ENCODE measurements at regions of chr13 and their contacts with region 1.

Region 1: GRCh38 chr13:74133657-74134201 is 475 bp downstream of the KLF12 start:
- DNase-seq: peak; percentile 68 to 93
- H3K4me3 ChIP-seq: peak overlapping the region; percentile 92 to 97
- H3K27ac ChIP-seq: peak overlapping the region; percentile 96 to 98
- H3K4me1 ChIP-seq: peaks cover under 1 to 25% of the 10 kb centered on the region in 2 donors
- H3K27me3 ChIP-seq: no peaks in the 10 kb centered on the region
- CTCF ChIP-seq: no peak

Region 2: GRCh38 chr13:72781451-72782439 is 1352.0 kb before region 1 on chr13 and contains the starts of genes DIS3 and PIBF1:
- intact Hi-C with region 1: loop called (anchors 10 kb)
- DNase-seq: peak; percentile 93 to 99
- H3K4me3 ChIP-seq: peak within 1 kb of the TSS; percentile 88 to 92
- H3K27ac ChIP-seq: peak within 1 kb of the TSS; percentile 85 to 92
- H3K4me1 ChIP-seq: peaks cover 0 to 21% of the 10 kb centered on the region in 2 donors
- H3K27me3 ChIP-seq: no peaks in the 10 kb centered on the region
- CTCF ChIP-seq: no peak
- total RNA-seq, gene DIS3: 12.8 TPM
- total RNA-seq, gene PIBF1: 17.0 TPM

Region 3: DNA sequence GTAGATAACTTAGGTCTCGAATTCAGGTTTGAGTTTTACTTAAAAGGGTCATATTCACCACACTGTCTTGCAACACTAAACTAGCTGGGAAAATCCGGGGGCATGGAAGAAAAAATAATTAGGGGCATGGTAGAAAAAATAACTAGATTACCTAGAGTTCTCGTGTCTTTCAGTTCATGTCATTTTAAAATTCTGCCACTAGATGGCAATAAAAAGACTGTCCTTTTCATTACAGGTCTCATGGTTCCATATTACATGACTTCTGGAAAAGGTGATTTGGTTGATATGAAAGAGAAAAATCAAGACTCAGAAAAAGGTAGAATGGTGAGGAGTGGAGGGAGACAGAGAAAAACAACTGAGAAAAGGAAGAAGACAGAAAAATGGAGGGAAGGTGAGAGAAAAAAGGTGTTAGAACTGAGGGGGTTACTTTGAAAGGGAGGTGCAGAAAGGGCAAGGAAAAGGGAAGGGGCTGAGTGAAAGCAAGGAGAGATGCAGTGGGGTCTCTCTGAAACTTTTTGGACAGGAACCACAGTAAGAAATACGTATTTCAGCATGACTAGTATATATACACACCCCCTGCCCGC is 298.5 kb before region 1 on chr13:
- intact Hi-C with region 1: loop called (anchors 5 kb)
- DNase-seq: no peak
- H3K4me3 ChIP-seq: no peak overlapping the region
- H3K27ac ChIP-seq: no peak overlapping the region
- H3K4me1 ChIP-seq: no peaks in the 10 kb centered on the region
- H3K27me3 ChIP-seq: no peaks in the 10 kb centered on the region
- CTCF ChIP-seq: peak; percentile 53 to 70 (median 53)

Region 4: GRCh38 chr13:74062933-74063332 is 70.8 kb before region 1 on chr13:
- intact Hi-C with region 1: loop called (anchors 1 kb)
- DNase-seq: peak; percentile 21 to 90
- H3K4me3 ChIP-seq: peak overlapping the region; percentile 38 to 49
- H3K27ac ChIP-seq: peak overlapping the region; percentile 74 to 83
- H3K4me1 ChIP-seq: peaks cover 4 to 35% of the 10 kb centered on the region in 2 donors
- H3K27me3 ChIP-seq: no peaks in the 10 kb centered on the region
- CTCF ChIP-seq: no peak

Region 5: DNA sequence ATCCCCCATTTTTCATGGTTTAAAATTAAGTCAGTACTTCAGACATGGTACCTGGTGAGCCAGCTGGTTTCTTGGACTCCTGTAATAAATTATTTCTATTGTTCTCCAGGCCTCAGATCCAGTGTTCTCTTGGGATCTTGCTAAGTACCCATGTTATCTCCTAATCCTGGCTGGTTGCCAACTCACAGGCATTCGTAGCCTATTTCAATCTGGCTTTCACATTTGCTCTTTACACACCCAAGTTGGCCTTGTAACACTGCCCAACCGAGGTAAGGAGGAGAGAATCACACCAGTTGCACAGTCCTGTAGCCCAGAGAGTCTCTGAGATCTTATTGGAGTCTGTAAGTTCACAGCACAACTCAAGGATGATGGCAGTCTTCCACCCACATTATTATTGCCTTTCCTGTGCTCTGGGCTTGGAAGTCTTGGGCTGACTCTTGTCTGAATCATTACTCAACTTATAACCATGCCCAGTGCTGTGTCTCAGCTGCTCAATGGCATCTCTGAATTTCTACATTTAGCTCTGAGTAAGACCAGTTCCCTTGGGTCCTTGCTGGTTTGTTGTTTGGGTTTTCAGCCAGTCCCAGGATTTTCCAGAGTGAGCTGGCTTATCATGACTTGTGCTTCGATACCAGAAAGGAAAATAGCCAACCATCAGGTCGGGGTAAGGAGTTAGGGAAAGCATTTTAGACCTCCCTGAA is 77.1 kb after region 1 on chr13:
- intact Hi-C with region 1: loop called (anchors 1 kb)
- DNase-seq: peak; percentile 30 to 89
- H3K4me3 ChIP-seq: peak overlapping the region in 1 of 2 donors; percentile 7
- H3K27ac ChIP-seq: peak overlapping the region; percentile 69 to 87
- H3K4me1 ChIP-seq: peaks cover 0 to 9% of the 10 kb centered on the region in 2 donors
- H3K27me3 ChIP-seq: no peaks in the 10 kb centered on the region
- CTCF ChIP-seq: no peak

Region 6: DNA sequence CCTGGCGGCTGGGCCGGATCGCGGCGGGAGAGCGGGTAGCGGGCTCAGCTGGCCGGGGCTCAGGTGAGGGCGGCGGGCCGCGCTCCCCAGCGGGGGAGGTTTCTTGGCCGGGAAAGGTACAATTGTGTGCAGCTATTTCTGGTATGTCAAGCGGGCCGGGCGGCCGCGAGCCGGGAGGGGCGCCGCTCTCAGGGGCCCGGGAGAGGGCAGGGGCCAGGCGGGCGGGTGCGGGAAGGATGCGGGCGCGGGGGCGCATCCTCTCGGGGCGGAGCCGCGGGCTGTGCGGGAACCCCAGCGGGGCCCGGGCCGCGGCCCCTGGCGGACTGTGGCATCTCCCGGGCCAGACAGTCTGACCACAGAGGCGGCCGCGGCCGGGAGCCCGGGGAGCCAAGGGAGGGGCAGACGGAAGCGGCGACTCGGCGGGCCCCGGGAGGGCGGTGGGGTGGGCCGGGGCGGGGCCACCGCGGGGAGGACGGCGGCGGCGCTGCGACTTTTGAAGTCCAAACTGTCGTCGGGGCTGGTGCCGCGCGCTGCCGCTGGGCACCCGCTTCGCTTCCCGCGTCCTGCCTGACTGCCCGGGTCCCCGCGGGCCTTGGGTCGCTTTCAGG is 1502.2 kb after region 1 on chr13 and contains the start of gene LMO7:
- intact Hi-C with region 1: loop called (anchors 10 kb)
- DNase-seq: peak in 1 of 2 donors; percentile 81
- H3K4me3 ChIP-seq: peak within 1 kb of the TSS; percentile 74 to 87
- H3K27ac ChIP-seq: peak within 1 kb of the TSS; percentile 73 to 85
- H3K4me1 ChIP-seq: no peaks in the 10 kb centered on the region
- H3K27me3 ChIP-seq: no peaks in the 10 kb centered on the region
- CTCF ChIP-seq: no peak
- total RNA-seq, gene LMO7: 176 TPM